Dendritic cell treated with granulocyte-macrophage colony-stimulating factor and Interleukin-4, amounts not matched to agents 40 ng/mL and 50 ng/mL, for 4 days (primary cell): ENCODE measurements at regions of chr1 and their contacts with region 1.

Region 1: GRCh38 chr1:45686317-45687013 is at the start of gene GPBP1L1:
- H3K4me3 Mint-ChIP-seq: peak within 1 kb of the TSS; percentile 97
- H3K27ac Mint-ChIP-seq: peak within 1 kb of the TSS; percentile 90
- H3K4me1 Mint-ChIP-seq: peaks cover 34% of the 10 kb centered on the region
- H3K27me3 Mint-ChIP-seq: no peaks in the 10 kb centered on the region

Region 2: DNA sequence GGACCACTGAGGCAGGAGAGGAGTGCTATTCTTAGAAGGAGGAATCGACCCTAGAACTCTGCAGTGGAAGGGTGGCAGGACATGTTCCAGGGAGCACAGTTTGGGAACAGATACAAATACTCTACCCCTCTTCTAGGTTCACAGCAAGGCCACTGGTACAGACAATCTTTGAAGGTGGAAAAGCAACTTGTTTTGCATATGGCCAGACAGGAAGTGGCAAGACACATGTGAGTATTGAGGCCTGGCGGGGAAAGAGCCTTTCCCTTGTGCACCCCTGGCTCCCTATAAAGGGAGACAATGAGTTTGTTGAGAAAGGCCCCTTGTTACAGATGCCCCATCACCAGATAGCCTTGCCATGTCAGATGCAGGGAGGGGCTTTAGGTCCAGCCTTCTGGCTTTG is 929.0 kb before region 1 on chr1:
- intact Hi-C with region 1: no loop called
- H3K4me3 Mint-ChIP-seq: no peak overlapping the region
- H3K27ac Mint-ChIP-seq: no peak overlapping the region
- H3K4me1 Mint-ChIP-seq: peaks cover 5% of the 10 kb centered on the region
- H3K27me3 Mint-ChIP-seq: no peaks in the 10 kb centered on the region

Region 3: GRCh38 chr1:45583666-45584350 is 102.7 kb before region 1 on chr1 and contains the start of gene NASP:
- intact Hi-C with region 1: loop called (anchors 2 kb)
- H3K4me3 Mint-ChIP-seq: peak within 1 kb of the TSS; percentile 98
- H3K27ac Mint-ChIP-seq: peak within 1 kb of the TSS; percentile 99
- H3K4me1 Mint-ChIP-seq: peaks cover 32% of the 10 kb centered on the region
- H3K27me3 Mint-ChIP-seq: no peaks in the 10 kb centered on the region

Region 4: GRCh38 chr1:45608175-45609156 is 78.0 kb before region 1 on chr1:
- intact Hi-C with region 1: loop called (anchors 5 kb)
- H3K4me3 Mint-ChIP-seq: peak overlapping the region; percentile 43
- H3K27ac Mint-ChIP-seq: peak overlapping the region; percentile 79
- H3K4me1 Mint-ChIP-seq: peaks cover 27% of the 10 kb centered on the region
- H3K27me3 Mint-ChIP-seq: no peaks in the 10 kb centered on the region

Region 5: GRCh38 chr1:45643978-45644377 is 42.5 kb before region 1 on chr1:
- intact Hi-C with region 1: loop called (anchors 5 kb)
- H3K4me3 Mint-ChIP-seq: no peak overlapping the region
- H3K27ac Mint-ChIP-seq: no peak overlapping the region
- H3K4me1 Mint-ChIP-seq: peaks cover 22% of the 10 kb centered on the region
- H3K27me3 Mint-ChIP-seq: no peaks in the 10 kb centered on the region

Region 6: GRCh38 chr1:45750298-45751038 is 64.0 kb after region 1 on chr1 and contains the start of gene IPP:
- intact Hi-C with region 1: loop called (anchors 1 kb)
- H3K4me3 Mint-ChIP-seq: peak within 1 kb of the TSS; percentile 85
- H3K27ac Mint-ChIP-seq: peak within 1 kb of the TSS; percentile 100
- H3K4me1 Mint-ChIP-seq: peaks cover 19% of the 10 kb centered on the region
- H3K27me3 Mint-ChIP-seq: no peaks in the 10 kb centered on the region

Region 7: DNA sequence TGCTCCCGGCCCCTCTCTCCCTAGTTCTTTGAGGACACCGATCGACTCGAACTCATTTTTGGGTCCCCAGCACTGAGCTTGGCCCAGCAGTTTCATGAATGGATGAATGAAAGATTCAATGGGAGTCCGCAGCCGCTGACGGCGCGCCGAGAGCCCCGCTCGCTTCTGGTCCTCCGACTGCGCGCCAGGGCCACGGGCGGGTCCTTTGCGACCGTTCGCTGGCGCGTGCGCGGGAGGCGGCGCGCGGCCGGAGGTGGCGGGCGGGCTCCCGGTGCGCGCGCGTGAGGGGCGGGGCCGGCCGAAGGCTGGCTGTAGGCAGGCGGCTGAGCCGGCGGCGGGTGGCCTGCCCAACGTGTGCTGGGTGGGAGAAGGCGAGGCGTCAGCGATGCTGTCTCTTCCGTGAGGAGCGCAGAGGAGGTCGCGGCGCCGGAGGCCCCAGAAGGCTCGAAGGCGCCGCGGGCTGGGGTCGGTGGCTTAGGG is 116.9 kb after region 1 on chr1 and contains the start of gene MAST2:
- intact Hi-C with region 1: loop called (anchors 2 kb)
- H3K4me3 Mint-ChIP-seq: peak within 1 kb of the TSS; percentile 82
- H3K27ac Mint-ChIP-seq: peak within 1 kb of the TSS; percentile 80
- H3K4me1 Mint-ChIP-seq: peaks cover 52% of the 10 kb centered on the region
- H3K27me3 Mint-ChIP-seq: peaks cover 1% of the 10 kb centered on the region

Region 8: GRCh38 chr1:45843474-45843905 is 157.0 kb after region 1 on chr1:
- intact Hi-C with region 1: loop called (anchors 10 kb)
- H3K4me3 Mint-ChIP-seq: no peak overlapping the region
- H3K27ac Mint-ChIP-seq: peak overlapping the region; percentile 13
- H3K4me1 Mint-ChIP-seq: peaks cover 14% of the 10 kb centered on the region
- H3K27me3 Mint-ChIP-seq: no peaks in the 10 kb centered on the region